ENCODE measurements at regions of chr15 and their contacts with region 1.

Region 1: GRCh38 chr15:75453703-75454470 is 2.4 kb upstream of the SIN3A start:
- DNase-seq: peak; percentile 99
- ATAC-seq: peak; percentile 40
- H3K4me3 ChIP-seq: peak overlapping the region; percentile 95 to 99 (median 97)
- H3K4me3 Mint-ChIP-seq: peak overlapping the region; percentile 98
- H3K27ac ChIP-seq: peak overlapping the region; percentile 90 to 95
- H3K27ac Mint-ChIP-seq: peak overlapping the region; percentile 99
- H3K4me1 ChIP-seq: peaks cover 21 to 37% of the 10 kb centered on the region in 2 donors
- H3K4me1 Mint-ChIP-seq: peaks cover 41% of the 10 kb centered on the region
- H3K27me3 ChIP-seq: no peaks in the 10 kb centered on the region
- H3K27me3 Mint-ChIP-seq: no peaks in the 10 kb centered on the region
- CTCF ChIP-seq: no peak

Region 2: GRCh38 chr15:74937596-74938296 is 516.1 kb before region 1 on chr15 and contains the start of gene COX5A:
- CTCF ChIA-PET with region 1: no interaction called
- POLR2A ChIA-PET with region 1: no interaction called
- intact Hi-C with region 1: loop called (anchors 5 kb)
- DNase-seq: peak; percentile 97
- ATAC-seq: peak; percentile 95
- H3K4me3 ChIP-seq: peak within 1 kb of the TSS; percentile 81 to 92 (median 85)
- H3K4me3 Mint-ChIP-seq: peak within 1 kb of the TSS; percentile 97
- H3K27ac ChIP-seq: peak within 1 kb of the TSS; percentile 67 to 89
- H3K27ac Mint-ChIP-seq: peak within 1 kb of the TSS; percentile 95
- H3K4me1 ChIP-seq: peaks cover 9 to 13% of the 10 kb centered on the region in 2 donors
- H3K4me1 Mint-ChIP-seq: peaks cover 24% of the 10 kb centered on the region
- H3K27me3 ChIP-seq: no peaks in the 10 kb centered on the region
- H3K27me3 Mint-ChIP-seq: no peaks in the 10 kb centered on the region
- CTCF ChIP-seq: no peak
- total RNA-seq, gene COX5A: 53.3 and 63.9 TPM in 2 replicates

Region 3: GRCh38 chr15:75042730-75043508 is 411.0 kb before region 1 on chr15:
- CTCF ChIA-PET with region 1: no interaction called
- POLR2A ChIA-PET with region 1: no interaction called
- intact Hi-C with region 1: loop called (anchors 5 kb)
- DNase-seq: peak; percentile 94
- ATAC-seq: peak; percentile 89
- H3K4me3 ChIP-seq: no peak overlapping the region
- H3K4me3 Mint-ChIP-seq: peak overlapping the region; percentile 25
- H3K27ac ChIP-seq: peak overlapping the region; percentile 76 to 80
- H3K27ac Mint-ChIP-seq: peak overlapping the region; percentile 89
- H3K4me1 ChIP-seq: peaks cover 48 to 65% of the 10 kb centered on the region in 2 donors
- H3K4me1 Mint-ChIP-seq: peaks cover 57% of the 10 kb centered on the region
- H3K27me3 ChIP-seq: no peaks in the 10 kb centered on the region
- H3K27me3 Mint-ChIP-seq: no peaks in the 10 kb centered on the region
- CTCF ChIP-seq: peak; percentile 61

Region 4: DNA sequence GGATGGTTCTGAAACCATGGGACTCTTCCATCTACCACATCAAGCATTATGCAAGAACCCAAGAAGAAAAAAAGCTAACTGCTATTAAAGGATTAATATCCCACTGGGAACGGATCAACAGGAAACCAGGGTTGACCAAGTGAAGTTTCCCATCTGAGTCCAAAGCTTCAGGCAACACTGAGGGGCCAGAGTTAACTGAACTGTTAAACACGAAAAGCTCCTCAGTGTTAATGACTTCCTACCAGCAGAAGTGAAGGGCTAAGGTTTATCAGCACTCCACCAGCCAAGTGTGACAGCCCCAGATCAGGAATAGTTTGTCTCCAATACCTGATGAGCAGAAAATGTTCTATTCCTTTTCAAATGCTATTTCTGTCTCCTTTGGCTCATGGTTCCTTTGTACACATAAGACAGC is 88.5 kb after region 1 on chr15:
- CTCF ChIA-PET with region 1: no interaction called
- POLR2A ChIA-PET with region 1: no interaction called
- intact Hi-C with region 1: no loop called
- DNase-seq: no peak
- ATAC-seq: no peak
- H3K4me3 ChIP-seq: no peak overlapping the region
- H3K4me3 Mint-ChIP-seq: no peak overlapping the region
- H3K27ac ChIP-seq: no peak overlapping the region
- H3K27ac Mint-ChIP-seq: peak overlapping the region; percentile 37
- H3K4me1 ChIP-seq: peaks cover 0 to 4% of the 10 kb centered on the region in 2 donors
- H3K4me1 Mint-ChIP-seq: peaks cover 20% of the 10 kb centered on the region
- H3K27me3 ChIP-seq: no peaks in the 10 kb centered on the region
- H3K27me3 Mint-ChIP-seq: no peaks in the 10 kb centered on the region
- CTCF ChIP-seq: no peak

Region 5: DNA sequence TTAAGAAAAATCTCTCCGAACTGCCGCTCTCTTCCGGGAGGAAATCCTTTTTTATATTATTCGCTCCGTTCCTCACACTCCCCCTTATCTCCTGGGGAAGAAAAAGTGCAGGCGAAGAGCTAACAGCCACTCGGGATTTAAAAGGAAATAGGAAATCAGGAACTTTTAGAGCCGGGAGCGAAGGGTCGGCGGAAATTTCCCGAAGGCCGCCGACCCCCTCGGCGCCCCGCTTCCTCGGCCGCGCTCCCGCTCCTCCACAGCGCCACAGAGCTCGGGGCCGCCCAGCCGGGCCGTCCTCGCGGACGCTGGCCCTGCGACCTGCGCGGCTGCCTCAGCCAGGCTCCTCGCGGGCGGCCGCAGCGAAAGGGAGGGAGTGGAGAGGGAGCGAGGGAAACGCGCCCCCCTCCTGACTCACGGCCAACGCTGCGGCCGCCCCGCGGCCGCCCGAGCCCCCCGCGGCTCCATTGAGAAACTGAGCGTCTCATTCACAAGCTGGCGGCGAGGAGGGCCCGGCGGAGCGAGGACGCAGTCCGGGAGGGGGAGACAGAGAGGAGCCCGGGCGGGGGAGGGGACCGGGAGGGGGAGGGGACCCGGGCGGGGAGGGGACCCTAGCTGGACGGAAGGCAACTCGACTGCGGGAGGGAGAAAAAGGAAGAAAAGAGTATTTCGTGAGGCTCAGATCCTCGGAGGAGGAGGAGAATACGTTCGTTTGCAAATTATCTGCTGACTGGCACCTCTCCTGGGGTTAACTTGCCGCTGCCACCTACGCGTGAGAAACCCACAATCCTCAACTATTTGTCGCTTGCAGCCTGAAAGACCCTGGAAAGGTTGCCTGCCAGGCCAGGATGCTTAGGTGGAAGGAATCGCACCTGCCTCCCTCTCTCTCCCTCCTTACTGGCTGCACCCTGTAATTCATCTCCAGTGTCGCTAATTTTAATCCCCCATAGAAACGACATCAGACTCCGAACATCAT is 125.3 kb after region 1 on chr15 and contains the start of gene PTPN9:
- CTCF ChIA-PET with region 1: interaction called, 4 read pairs
- POLR2A ChIA-PET with region 1: interaction called, 8 read pairs
- intact Hi-C with region 1: loop called (anchors 2 kb)
- DNase-seq: peak; percentile 74
- ATAC-seq: peak; percentile 83
- H3K4me3 ChIP-seq: peak within 1 kb of the TSS; percentile 67 to 93 (median 70)
- H3K4me3 Mint-ChIP-seq: peak within 1 kb of the TSS; percentile 90
- H3K27ac ChIP-seq: peak within 1 kb of the TSS in 1 of 2 donors; percentile 76
- H3K27ac Mint-ChIP-seq: peak within 1 kb of the TSS; percentile 87
- H3K4me1 ChIP-seq: peaks cover 17 to 18% of the 10 kb centered on the region in 2 donors
- H3K4me1 Mint-ChIP-seq: peaks cover 20% of the 10 kb centered on the region
- H3K27me3 ChIP-seq: no peaks in the 10 kb centered on the region
- H3K27me3 Mint-ChIP-seq: no peaks in the 10 kb centered on the region
- CTCF ChIP-seq: peak; percentile 44
- total RNA-seq, gene PTPN9: 15.5 and 19.9 TPM in 2 replicates

Region 6: DNA sequence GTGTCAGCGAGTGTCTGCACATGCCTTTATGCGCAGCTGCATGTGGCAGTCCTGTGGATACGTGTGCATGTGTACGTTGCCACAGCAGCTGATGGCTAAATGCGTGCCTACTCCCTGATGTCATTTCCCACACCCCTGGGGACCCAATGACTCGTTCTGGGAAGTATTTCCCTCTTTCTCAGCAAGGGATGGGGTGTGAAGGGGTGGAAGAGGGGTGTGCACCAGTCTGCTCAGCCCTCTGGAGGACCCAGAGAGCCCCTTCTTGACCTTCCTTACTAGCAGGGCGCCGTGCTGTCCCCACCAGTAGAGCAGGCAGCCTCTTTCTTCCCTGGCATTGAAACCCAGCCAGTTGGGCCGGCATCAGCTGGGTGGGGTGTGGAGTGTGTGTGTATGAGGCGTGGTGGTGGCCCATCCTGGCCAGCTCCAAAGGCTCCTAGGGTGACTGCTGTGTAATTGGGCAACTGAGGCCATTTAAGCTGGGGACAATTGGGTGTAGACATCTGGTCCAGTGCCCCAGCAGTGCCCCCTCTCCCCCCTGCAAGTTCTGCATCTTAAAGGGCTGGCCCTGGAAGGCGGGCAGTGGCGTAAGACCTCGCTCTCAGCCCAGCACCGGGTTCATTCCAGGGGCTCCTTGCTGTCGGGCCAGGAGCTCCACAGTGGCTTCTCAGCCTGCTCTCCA is 213.1 kb after region 1 on chr15:
- CTCF ChIA-PET with region 1: no interaction called
- POLR2A ChIA-PET with region 1: no interaction called
- intact Hi-C with region 1: no loop called
- DNase-seq: no peak
- ATAC-seq: no peak
- H3K4me3 ChIP-seq: no peak overlapping the region
- H3K4me3 Mint-ChIP-seq: no peak overlapping the region
- H3K27ac ChIP-seq: no peak overlapping the region
- H3K27ac Mint-ChIP-seq: no peak overlapping the region
- H3K4me1 ChIP-seq: no peaks in the 10 kb centered on the region
- H3K4me1 Mint-ChIP-seq: no peaks in the 10 kb centered on the region
- H3K27me3 ChIP-seq: no peaks in the 10 kb centered on the region
- H3K27me3 Mint-ChIP-seq: no peaks in the 10 kb centered on the region
- CTCF ChIP-seq: no peak

Region 7: GRCh38 chr15:75738647-75739331 is 284.9 kb after region 1 on chr15:
- CTCF ChIA-PET with region 1: no interaction called
- POLR2A ChIA-PET with region 1: interaction called, 3 read pairs
- intact Hi-C with region 1: loop called (anchors 2 kb)
- DNase-seq: peak; percentile 95
- ATAC-seq: peak; percentile 98
- H3K4me3 ChIP-seq: peak overlapping the region in 4 of 5 experiments; percentile 77 to 86 (median 82)
- H3K4me3 Mint-ChIP-seq: peak overlapping the region; percentile 90
- H3K27ac ChIP-seq: peak overlapping the region; percentile 54 to 72
- H3K27ac Mint-ChIP-seq: peak overlapping the region; percentile 67
- H3K4me1 ChIP-seq: peaks cover 6 to 17% of the 10 kb centered on the region in 2 donors
- H3K4me1 Mint-ChIP-seq: peaks cover 14% of the 10 kb centered on the region
- H3K27me3 ChIP-seq: peaks cover 0 to 7% (median 0%) of the 10 kb centered on the region in 4 experiments
- H3K27me3 Mint-ChIP-seq: peaks cover 11% of the 10 kb centered on the region
- CTCF ChIP-seq: no peak

Measured in B cell (primary cell).